ENCODE measurements at regions of chr2 and their contacts with region 1.

Region 1: DNA sequence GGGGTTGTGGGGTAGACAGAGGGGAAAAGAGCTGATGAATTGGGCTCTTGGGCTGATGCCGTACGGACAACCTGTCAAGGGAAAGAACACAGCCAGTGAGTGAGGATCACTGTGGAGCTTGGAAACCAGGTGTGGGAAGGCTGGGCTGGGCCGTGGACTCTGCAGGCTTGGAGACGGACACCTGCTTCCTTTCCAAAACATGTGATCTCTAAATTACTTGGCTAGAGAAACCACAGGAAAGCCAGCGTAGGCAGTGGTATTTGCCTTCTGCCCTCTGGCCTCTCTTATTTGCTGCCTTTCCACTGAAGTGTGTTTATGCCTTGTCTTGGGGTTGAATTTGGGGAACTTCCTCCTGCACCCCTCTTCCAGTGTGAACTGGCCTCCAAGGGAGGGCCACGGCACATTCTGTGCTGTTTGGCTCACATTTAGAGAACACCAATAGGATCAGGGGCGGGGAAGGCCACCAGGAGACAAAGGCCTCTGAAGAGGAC is 267.7 kb downstream of the PRKCE start:
- DNase-seq: no peak
- ATAC-seq: peak; percentile 21
- H3K4me3 Mint-ChIP-seq: peak overlapping the region; percentile 22
- H3K27ac Mint-ChIP-seq: peak overlapping the region; percentile 84
- H3K4me1 Mint-ChIP-seq: peaks cover 51% of the 10 kb centered on the region
- H3K27me3 Mint-ChIP-seq: no peaks in the 10 kb centered on the region
- CTCF ChIP-seq: no peak

Region 2: GRCh38 chr2:44964752-44965236 is 954.4 kb before region 1 on chr2:
- CTCF ChIA-PET with region 1: no interaction called
- POLR2A ChIA-PET with region 1: no interaction called
- intact Hi-C with region 1: no loop called
- DNase-seq: no peak
- ATAC-seq: no peak
- H3K4me3 Mint-ChIP-seq: no peak overlapping the region
- H3K27ac Mint-ChIP-seq: no peak overlapping the region
- H3K4me1 Mint-ChIP-seq: no peaks in the 10 kb centered on the region
- H3K27me3 Mint-ChIP-seq: peaks cover 48% of the 10 kb centered on the region
- CTCF ChIP-seq: no peak

Region 3: DNA sequence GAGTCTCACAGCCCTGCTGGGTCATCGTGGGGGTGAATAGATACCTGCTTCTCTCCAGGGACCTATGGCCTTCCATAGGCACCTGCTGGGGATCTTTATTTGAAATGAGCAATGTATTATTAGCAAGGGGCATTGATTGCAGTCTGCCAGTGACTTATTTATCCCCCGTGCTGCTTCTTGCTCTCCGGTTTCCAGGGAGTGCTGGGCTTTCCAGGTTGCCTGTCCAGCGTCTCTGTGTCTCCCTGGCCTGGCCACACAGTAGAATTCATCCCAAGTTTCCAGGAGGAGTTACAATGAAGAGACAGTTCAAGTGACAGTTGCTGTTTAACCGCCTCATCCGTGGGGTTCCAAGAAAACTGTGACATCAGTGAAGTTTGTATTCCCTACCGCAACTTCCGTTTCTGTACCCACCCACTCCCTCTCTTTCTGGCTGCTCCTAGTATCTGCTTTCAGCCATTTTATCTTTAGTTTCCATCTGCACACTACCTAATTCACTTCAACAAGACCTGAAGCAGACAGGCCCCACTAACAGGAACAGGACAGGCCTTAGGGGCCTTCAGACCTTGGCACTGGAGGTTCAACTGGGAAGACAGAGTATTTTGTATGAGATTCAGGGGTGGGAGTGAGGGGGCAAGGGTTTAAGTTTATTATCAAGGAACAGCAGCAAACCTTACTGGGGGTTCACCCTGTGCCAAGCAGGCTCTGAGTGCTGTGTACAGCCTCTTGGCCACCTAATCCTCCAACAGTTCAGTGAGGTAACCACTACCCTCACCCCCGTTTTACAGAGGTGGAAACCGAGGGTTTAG is 133.0 kb before region 1 on chr2:
- CTCF ChIA-PET with region 1: interaction called, 5 read pairs
- POLR2A ChIA-PET with region 1: no interaction called
- intact Hi-C with region 1: loop called (anchors 5 kb)
- DNase-seq: no peak
- ATAC-seq: no peak
- H3K4me3 Mint-ChIP-seq: no peak overlapping the region
- H3K27ac Mint-ChIP-seq: peak overlapping the region; percentile 47
- H3K4me1 Mint-ChIP-seq: peaks cover 47% of the 10 kb centered on the region
- H3K27me3 Mint-ChIP-seq: no peaks in the 10 kb centered on the region
- CTCF ChIP-seq: no peak

Region 4: GRCh38 chr2:45874344-45874743 is 44.9 kb before region 1 on chr2:
- CTCF ChIA-PET with region 1: no interaction called
- POLR2A ChIA-PET with region 1: no interaction called
- intact Hi-C with region 1: no loop called
- DNase-seq: no peak
- ATAC-seq: no peak
- H3K4me3 Mint-ChIP-seq: no peak overlapping the region
- H3K27ac Mint-ChIP-seq: no peak overlapping the region
- H3K4me1 Mint-ChIP-seq: peaks cover 15% of the 10 kb centered on the region
- H3K27me3 Mint-ChIP-seq: no peaks in the 10 kb centered on the region
- CTCF ChIP-seq: no peak